ENCODE measurements at regions of chr10 and their contacts with region 1.

Region 1: DNA sequence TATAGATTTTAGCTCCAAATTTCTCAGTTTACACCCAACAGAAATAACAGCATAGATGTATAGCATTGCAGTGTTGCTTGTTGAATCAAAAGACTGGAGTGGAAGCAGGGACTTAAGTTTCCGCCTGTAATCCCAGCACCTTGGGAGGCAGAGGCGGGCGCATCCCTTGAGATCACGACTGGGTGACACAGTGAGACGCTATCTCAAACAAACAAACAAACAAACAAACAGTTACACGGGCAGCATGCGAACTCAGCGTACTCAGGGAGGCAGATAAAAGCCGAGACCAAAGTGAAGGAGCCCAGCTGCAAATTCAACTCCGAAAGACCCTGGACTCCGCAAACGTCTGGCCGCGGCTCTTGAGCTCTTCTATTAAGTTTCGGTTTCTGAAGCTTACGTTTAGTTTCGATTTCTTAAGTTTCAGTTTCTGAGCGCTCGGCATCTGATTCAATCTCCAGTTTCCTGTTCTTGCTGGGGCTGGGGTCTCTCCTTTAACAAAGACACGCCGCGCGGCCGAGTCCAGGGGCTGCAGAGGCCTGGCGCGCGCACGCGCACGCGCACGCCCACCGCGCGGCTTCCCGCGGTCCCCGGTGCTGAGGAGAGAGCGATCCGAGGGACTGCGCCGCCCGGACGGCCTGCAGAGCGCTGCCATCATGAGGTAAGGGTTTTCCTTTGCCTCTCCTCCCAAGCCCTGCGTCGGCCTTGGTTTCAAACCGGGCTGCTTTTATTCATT is at the start of gene IFIT5:
- DNase-seq: peak; percentile 71
- H3K4me3 Mint-ChIP-seq: peak within 1 kb of the TSS; percentile 95
- H3K27ac Mint-ChIP-seq: peak within 1 kb of the TSS; percentile 98
- H3K4me1 Mint-ChIP-seq: peaks cover 63% of the 10 kb centered on the region
- H3K27me3 Mint-ChIP-seq: no peaks in the 10 kb centered on the region
- total RNA-seq, gene IFIT5: 44.0 to 45.1 TPM

Region 2: GRCh38 chr10:89251409-89252224 is 162.7 kb before region 1 on chr10 and contains the start of gene LIPA:
- CTCF ChIA-PET with region 1: interaction called, 9 read pairs
- POLR2A ChIA-PET with region 1: interaction called, 25 read pairs
- DNase-seq: peak; percentile 95
- H3K4me3 Mint-ChIP-seq: peak within 1 kb of the TSS; percentile 86
- H3K27ac Mint-ChIP-seq: peak within 1 kb of the TSS; percentile 65
- H3K4me1 Mint-ChIP-seq: peaks cover 25% of the 10 kb centered on the region
- H3K27me3 Mint-ChIP-seq: peaks cover 9% of the 10 kb centered on the region
- total RNA-seq, gene LIPA: 40.3 to 42.4 TPM

Region 3: DNA sequence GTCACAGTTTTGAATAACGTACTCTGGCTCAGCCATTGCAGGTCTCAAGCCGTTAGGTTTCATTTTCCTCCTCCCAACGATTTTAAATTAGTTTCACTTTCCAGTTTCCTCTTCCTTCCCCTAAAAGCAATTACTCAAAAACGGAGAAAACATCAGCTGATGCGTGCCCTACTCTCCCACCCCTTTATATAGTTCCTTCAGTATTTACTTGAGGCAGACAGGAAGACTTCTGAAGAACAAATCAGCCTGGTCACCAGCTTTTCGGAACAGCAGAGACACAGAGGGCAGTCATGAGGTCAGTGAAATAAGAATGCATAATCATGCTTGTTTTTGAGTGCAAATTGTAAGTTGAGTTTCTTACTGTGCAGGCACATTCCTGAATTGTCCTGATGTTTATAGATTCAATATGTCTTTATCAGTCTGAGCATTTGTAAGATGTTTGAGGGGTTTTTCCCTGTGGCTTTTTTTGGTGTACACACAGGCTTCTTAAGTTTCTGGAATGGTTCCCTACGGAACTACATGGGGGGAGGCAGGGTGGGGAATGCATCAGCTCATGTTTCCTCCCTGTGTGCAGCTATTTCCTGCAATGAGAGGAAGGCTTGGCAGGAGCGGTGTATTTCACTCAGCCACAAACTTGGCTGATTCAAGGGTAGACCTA is 86.4 kb before region 1 on chr10 and contains the start of gene IFIT3:
- CTCF ChIA-PET with region 1: interaction called, 3 read pairs
- POLR2A ChIA-PET with region 1: interaction called, 18 read pairs
- DNase-seq: peak; percentile 32
- H3K4me3 Mint-ChIP-seq: peak within 1 kb of the TSS; percentile 81
- H3K27ac Mint-ChIP-seq: peak within 1 kb of the TSS; percentile 72
- H3K4me1 Mint-ChIP-seq: peaks cover 58% of the 10 kb centered on the region
- H3K27me3 Mint-ChIP-seq: peaks cover 13% of the 10 kb centered on the region
- total RNA-seq, gene IFIT3: 72.6 to 74.5 TPM

Region 4: GRCh38 chr10:89391917-89392756 is 22.2 kb before region 1 on chr10 and contains the start of gene IFIT1:
- CTCF ChIA-PET with region 1: interaction called, 19 read pairs
- POLR2A ChIA-PET with region 1: interaction called, 50 read pairs
- DNase-seq: peak; percentile 65
- H3K4me3 Mint-ChIP-seq: peak within 1 kb of the TSS; percentile 87
- H3K27ac Mint-ChIP-seq: peak within 1 kb of the TSS; percentile 90
- H3K4me1 Mint-ChIP-seq: peaks cover 43% of the 10 kb centered on the region
- H3K27me3 Mint-ChIP-seq: no peaks in the 10 kb centered on the region
- total RNA-seq, gene IFIT1: 69.8 to 71.6 TPM

Region 5: GRCh38 chr10:89398003-89398749 is 16.1 kb before region 1 on chr10:
- CTCF ChIA-PET with region 1: interaction called, 19 read pairs
- POLR2A ChIA-PET with region 1: interaction called, 50 read pairs
- DNase-seq: no peak
- H3K4me3 Mint-ChIP-seq: no peak overlapping the region
- H3K27ac Mint-ChIP-seq: peak overlapping the region; percentile 16
- H3K4me1 Mint-ChIP-seq: peaks cover 59% of the 10 kb centered on the region
- H3K27me3 Mint-ChIP-seq: no peaks in the 10 kb centered on the region

Region 6: DNA sequence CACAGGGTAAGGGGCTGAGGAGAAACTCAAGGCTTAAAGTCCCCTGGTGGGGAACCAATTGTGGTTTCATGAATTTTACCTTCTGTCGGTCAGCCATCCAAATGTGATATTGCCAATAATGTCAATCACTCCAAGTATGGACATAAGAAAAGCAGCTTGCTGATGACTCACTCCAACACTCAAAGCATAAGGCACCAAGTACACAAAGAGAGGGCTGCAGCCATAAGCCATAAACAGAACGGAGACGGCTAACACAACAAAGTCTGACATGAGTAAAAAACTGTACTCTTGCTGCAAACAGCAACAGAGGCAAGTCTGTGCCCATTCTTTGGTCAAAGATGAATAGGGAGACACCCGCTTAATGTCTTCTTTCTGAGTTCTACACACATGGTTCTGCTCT is 24.2 kb after region 1 on chr10:
- CTCF ChIA-PET with region 1: no interaction called
- POLR2A ChIA-PET with region 1: no interaction called
- DNase-seq: no peak
- H3K4me3 Mint-ChIP-seq: no peak overlapping the region
- H3K27ac Mint-ChIP-seq: no peak overlapping the region
- H3K4me1 Mint-ChIP-seq: no peaks in the 10 kb centered on the region
- H3K27me3 Mint-ChIP-seq: peaks cover 47% of the 10 kb centered on the region

Region 7: GRCh38 chr10:89643431-89644331 is 229.4 kb after region 1 on chr10:
- CTCF ChIA-PET with region 1: interaction called, 3 read pairs
- POLR2A ChIA-PET with region 1: interaction called, 15 read pairs
- DNase-seq: peak; percentile 81
- H3K4me3 Mint-ChIP-seq: no peak overlapping the region
- H3K27ac Mint-ChIP-seq: no peak overlapping the region
- H3K4me1 Mint-ChIP-seq: peaks cover 10% of the 10 kb centered on the region
- H3K27me3 Mint-ChIP-seq: peaks cover 7% of the 10 kb centered on the region

Region 8: GRCh38 chr10:89701238-89702120 is 287.2 kb after region 1 on chr10 and contains the start of gene KIF20B:
- CTCF ChIA-PET with region 1: interaction called, 6 read pairs
- POLR2A ChIA-PET with region 1: interaction called, 18 read pairs
- DNase-seq: peak; percentile 97
- H3K4me3 Mint-ChIP-seq: peak within 1 kb of the TSS; percentile 99
- H3K27ac Mint-ChIP-seq: peak within 1 kb of the TSS; percentile 98
- H3K4me1 Mint-ChIP-seq: peaks cover 45% of the 10 kb centered on the region
- H3K27me3 Mint-ChIP-seq: no peaks in the 10 kb centered on the region
- total RNA-seq, gene KIF20B: 82.1 to 83.5 TPM

Measured in activated CD4-positive, alpha-beta memory T cell treated with anti-CD3 and anti-CD28 coated beads, Interleukin-2, amount 10 ng/mL, durations not matched to agents 7 days and 5 days (primary cell).